ENCODE measurements at regions of chr3 and their contacts with region 1.

Region 1: GRCh38 chr3:100073899-100074307 is 40.4 kb downstream of the FILIP1L start:
- DNase-seq: peak in 1 of 7 donors; percentile 8
- H3K4me3 ChIP-seq: no peak overlapping the region
- H3K27ac ChIP-seq: peak overlapping the region in 2 of 5 donors; percentile 9 to 62
- H3K4me1 ChIP-seq: peaks cover 4 to 30% of the 10 kb centered on the region in 2 donors
- H3K27me3 ChIP-seq: no peaks in the 10 kb centered on the region
- CTCF ChIP-seq: no peak
- POLR2A ChIP-seq: no peak

Region 2: GRCh38 chr3:100125161-100125938 is 51.4 kb after region 1 on chr3:
- intact Hi-C with region 1: no loop called
- DNase-seq: no peak
- H3K4me3 ChIP-seq: no peak overlapping the region
- H3K27ac ChIP-seq: no peak overlapping the region
- H3K4me1 ChIP-seq: peaks cover 10 to 24% of the 10 kb centered on the region in 2 donors
- H3K27me3 ChIP-seq: no peaks in the 10 kb centered on the region
- CTCF ChIP-seq: no peak
- POLR2A ChIP-seq: no peak

Region 3: DNA sequence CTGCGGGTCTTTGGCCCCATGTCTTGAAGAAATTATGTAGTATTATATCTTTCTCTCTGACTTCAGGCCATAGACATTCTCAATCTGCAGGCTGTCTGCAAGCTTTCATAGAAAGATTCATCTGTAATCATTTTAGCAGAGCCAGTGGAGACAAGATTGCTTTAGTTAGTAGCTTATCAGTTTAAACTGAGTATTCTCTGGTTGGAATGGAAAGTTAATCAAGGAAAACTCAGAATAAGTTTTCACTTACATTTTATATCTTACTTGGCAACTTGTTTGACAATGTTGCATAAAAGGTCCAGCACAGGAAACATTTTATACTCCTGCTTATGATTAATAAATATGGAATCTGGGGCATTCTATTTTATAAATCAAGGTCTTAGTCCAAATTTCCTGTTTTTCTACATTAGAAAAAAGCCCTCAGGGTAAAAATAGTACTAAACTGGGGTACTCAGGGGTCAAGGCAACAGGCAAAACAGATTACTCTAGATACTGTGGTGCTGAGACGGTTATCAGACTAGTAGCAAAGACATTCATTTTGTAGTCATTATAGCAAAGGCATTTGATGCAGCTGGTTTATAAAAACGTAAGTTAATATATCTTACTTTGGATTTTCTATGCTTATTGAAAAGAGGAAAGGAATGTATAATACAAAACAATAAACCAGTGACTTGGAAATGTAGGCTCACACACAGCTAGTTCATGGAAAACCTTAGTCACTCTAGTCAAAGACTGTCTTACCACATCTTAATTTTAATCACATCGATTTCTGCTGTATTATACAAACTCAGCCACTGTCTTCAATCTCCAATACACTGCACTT is 85.6 kb after region 1 on chr3:
- intact Hi-C with region 1: loop called in 1 of 2 experiments (anchors 10 kb)
- DNase-seq: no peak
- H3K4me3 ChIP-seq: no peak overlapping the region
- H3K27ac ChIP-seq: peak overlapping the region; percentile 47 to 79 (median 57)
- H3K4me1 ChIP-seq: peaks cover 8 to 48% of the 10 kb centered on the region in 2 donors
- H3K27me3 ChIP-seq: no peaks in the 10 kb centered on the region
- CTCF ChIP-seq: no peak
- POLR2A ChIP-seq: no peak

Measured in adrenal gland (tissue), 19 donors.